Ovary (tissue), 10 donors: ENCODE measurements at regions of chr9 and their contacts with region 1.

Region 1: GRCh38 chr9:100357501-100357900 is 4.8 kb upstream of the TEX10 start:
- DNase-seq: no peak
- H3K4me3 ChIP-seq: no peak overlapping the region
- H3K27ac ChIP-seq: no peak overlapping the region
- H3K4me1 ChIP-seq: no peaks in the 10 kb centered on the region
- H3K27me3 ChIP-seq: no peaks in the 10 kb centered on the region
- CTCF ChIP-seq: no peak
- EP300 ChIP-seq: no peak
- POLR2A ChIP-seq: no peak

Region 2: GRCh38 chr9:100294341-100294740 is 63.2 kb before region 1 on chr9:
- intact Hi-C with region 1: no loop called
- DNase-seq: no peak
- H3K4me3 ChIP-seq: no peak overlapping the region
- H3K27ac ChIP-seq: no peak overlapping the region
- H3K4me1 ChIP-seq: no peaks in the 10 kb centered on the region
- H3K27me3 ChIP-seq: no peaks in the 10 kb centered on the region
- CTCF ChIP-seq: no peak
- EP300 ChIP-seq: no peak
- POLR2A ChIP-seq: no peak

Region 3: GRCh38 chr9:100341889-100342288 is 15.6 kb before region 1 on chr9:
- intact Hi-C with region 1: loop called in 1 of 4 experiments (anchors 2 kb)
- DNase-seq: no peak
- H3K4me3 ChIP-seq: no peak overlapping the region
- H3K27ac ChIP-seq: no peak overlapping the region
- H3K4me1 ChIP-seq: no peaks in the 10 kb centered on the region
- H3K27me3 ChIP-seq: no peaks in the 10 kb centered on the region
- CTCF ChIP-seq: no peak
- EP300 ChIP-seq: no peak
- POLR2A ChIP-seq: no peak